ENCODE measurements at regions of chr3 and their contacts with region 1.

Region 1: GRCh38 chr3:113745273-113746068 is 578 bp downstream of the NAA50 start:
- DNase-seq: peak; percentile 93
- H3K4me3 ChIP-seq: peak overlapping the region; percentile 93 to 95 (median 95)
- H3K27ac ChIP-seq: peak overlapping the region; percentile 99
- H3K4me1 ChIP-seq: peaks cover 38% of the 10 kb centered on the region
- H3K27me3 ChIP-seq: no peaks in the 10 kb centered on the region
- CTCF ChIP-seq: peak; percentile 53 to 63
- POLR2A ChIP-seq: no peak

Region 2: DNA sequence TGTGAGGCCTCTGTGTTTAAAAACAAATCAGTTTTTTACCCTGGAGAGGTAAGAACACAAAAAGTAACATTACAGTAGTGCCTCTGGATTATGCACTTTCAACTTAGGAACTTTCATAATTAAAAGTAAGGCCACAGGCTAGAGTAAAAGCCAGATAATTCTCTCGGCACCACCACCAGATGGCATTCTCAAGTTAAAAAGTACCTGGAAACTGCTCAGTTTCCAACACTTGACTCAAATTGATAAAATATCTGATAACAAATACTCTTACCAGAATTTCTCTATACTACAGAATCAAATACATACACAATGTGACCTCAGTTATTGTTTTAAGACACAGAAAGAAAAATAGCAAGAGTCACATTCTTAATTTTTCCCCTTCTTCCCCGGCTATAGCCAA is 250.4 kb before region 1 on chr3:
- CTCF ChIA-PET with region 1: interaction called, 3 read pairs
- POLR2A ChIA-PET with region 1: no interaction called
- dilution Hi-C with region 1: no loop called
- intact Hi-C with region 1: loop called (anchors 2 kb)
- DNase-seq: peak; percentile 61
- H3K4me3 ChIP-seq: no peak overlapping the region
- H3K27ac ChIP-seq: no peak overlapping the region
- H3K4me1 ChIP-seq: peaks cover 25% of the 10 kb centered on the region
- H3K27me3 ChIP-seq: no peaks in the 10 kb centered on the region
- CTCF ChIP-seq: peak in 1 of 2 donors; percentile 38
- POLR2A ChIP-seq: no peak

Region 3: DNA sequence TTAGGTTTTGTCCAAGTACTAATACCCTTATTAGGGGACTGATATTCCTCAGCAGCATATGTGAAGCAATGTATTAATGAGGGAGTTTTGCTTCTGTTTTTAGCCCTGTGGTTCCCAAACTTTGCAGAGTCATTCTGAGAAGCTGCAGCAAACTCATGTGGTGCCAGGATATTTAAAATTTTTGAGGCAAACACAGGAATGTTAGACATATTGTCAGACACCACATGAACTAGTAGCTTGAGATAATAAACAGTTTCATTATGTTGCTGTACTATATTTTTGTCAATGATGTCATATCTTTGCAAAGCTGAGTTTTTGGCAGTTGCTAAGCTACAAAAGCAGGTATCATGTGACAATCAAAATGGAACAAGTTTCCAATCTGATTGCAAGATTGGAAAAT is 38.0 kb after region 1 on chr3:
- CTCF ChIA-PET with region 1: interaction called, 9 read pairs
- POLR2A ChIA-PET with region 1: interaction called, 6 read pairs
- dilution Hi-C with region 1: no loop called
- intact Hi-C with region 1: loop called (anchors 1 kb)
- DNase-seq: peak; percentile 90
- H3K4me3 ChIP-seq: peak overlapping the region in 1 of 3 experiments; percentile 41
- H3K27ac ChIP-seq: peak overlapping the region; percentile 94
- H3K4me1 ChIP-seq: peaks cover 26% of the 10 kb centered on the region
- H3K27me3 ChIP-seq: no peaks in the 10 kb centered on the region
- CTCF ChIP-seq: no peak
- POLR2A ChIP-seq: no peak

Region 4: DNA sequence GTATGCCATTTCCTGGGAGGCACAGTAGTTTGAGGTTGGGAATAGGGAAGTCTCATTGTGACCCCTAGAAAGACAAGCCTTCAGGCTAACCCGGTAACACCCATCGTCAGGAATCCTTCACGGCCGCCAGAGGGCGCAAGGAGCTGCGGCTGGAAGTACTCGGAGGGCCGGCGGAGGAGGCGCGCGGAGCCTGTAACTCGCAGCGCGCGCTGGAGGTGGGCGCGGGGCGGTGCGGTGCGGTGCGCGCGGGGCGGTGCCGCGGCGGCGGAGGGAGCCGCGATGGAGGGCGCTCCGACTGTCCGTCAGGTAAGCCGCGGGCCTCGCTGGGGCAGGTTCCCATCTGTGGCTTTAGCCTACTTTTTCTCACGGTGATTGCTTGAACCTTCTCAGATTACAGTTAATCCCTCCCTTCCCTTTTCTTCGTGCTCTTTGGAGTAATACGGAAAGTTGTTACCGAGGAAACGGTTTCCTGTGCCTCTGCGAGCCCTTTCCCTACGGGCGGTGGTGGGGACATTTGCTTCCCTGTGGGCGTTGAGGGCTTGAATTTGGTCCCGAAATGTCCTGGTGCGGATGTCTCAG is 93.2 kb after region 1 on chr3 and contains the start of gene GRAMD1C:
- CTCF ChIA-PET with region 1: interaction called, 31 read pairs
- POLR2A ChIA-PET with region 1: interaction called, 3 read pairs
- dilution Hi-C with region 1: no loop called
- intact Hi-C with region 1: loop called (anchors 1 kb)
- DNase-seq: peak; percentile 91
- H3K4me3 ChIP-seq: peak within 1 kb of the TSS; percentile 67 to 80 (median 69)
- H3K27ac ChIP-seq: peak within 1 kb of the TSS; percentile 83
- H3K4me1 ChIP-seq: no peaks in the 10 kb centered on the region
- H3K27me3 ChIP-seq: no peaks in the 10 kb centered on the region
- CTCF ChIP-seq: peak; percentile 85 to 93
- POLR2A ChIP-seq: peak; percentile 61
- total RNA-seq, gene GRAMD1C: 17.0 and 24.0 TPM in 2 replicates

Region 5: GRCh38 chr3:113912552-113913236 is 167.2 kb after region 1 on chr3:
- CTCF ChIA-PET with region 1: interaction called, 15 read pairs
- POLR2A ChIA-PET with region 1: no interaction called
- dilution Hi-C with region 1: no loop called
- intact Hi-C with region 1: no loop called
- DNase-seq: peak; percentile 66
- H3K4me3 ChIP-seq: no peak overlapping the region
- H3K27ac ChIP-seq: no peak overlapping the region
- H3K4me1 ChIP-seq: no peaks in the 10 kb centered on the region
- H3K27me3 ChIP-seq: no peaks in the 10 kb centered on the region
- CTCF ChIP-seq: peak; percentile 39 to 43
- POLR2A ChIP-seq: no peak

Measured in endothelial cell of umbilical vein (primary cell).